ENCODE measurements at regions of chr3 and their contacts with region 1.

Region 1: DNA sequence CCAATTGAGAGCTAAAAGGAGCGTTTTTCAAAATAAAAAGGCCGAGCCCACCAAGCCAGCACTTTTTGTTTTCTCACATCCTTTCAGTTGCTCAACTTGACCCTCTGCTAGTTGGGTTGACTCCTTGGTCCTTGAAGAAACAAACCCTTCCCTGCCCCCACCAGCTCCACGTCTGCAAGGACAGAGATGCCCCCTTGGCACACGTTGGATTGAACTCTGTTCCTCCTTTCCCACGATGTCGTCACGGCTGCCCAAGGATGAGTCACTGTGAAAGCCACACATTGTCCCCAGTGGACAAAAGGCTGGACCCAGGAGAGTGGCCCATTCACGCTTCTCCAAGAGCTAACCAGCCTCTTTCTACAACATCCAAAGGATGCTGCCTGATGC is 43.0 kb upstream of the SPATA12 start:
- DNase-seq: peak in 9 of 10 donors; percentile 60 to 90 (median 86)
- H3K4me3 ChIP-seq: peak overlapping the region in 33 of 59 donors; percentile 0 to 51 (median 20)
- H3K27ac ChIP-seq: peak overlapping the region in 57 of 59 donors; percentile 40 to 97 (median 79)
- H3K27me3 ChIP-seq: no peaks in the 10 kb centered on the region
- CTCF ChIP-seq: peak in 10 of 56 donors; percentile 9 to 34 (median 15)

Region 2: GRCh38 chr3:56484122-56484521 is 533.3 kb before region 1 on chr3:
- intact Hi-C with region 1: no loop called
- DNase-seq: peak in 7 of 10 donors; percentile 44 to 77 (median 53)
- H3K4me3 ChIP-seq: no peak overlapping the region
- H3K27ac ChIP-seq: no peak overlapping the region
- H3K27me3 ChIP-seq: peaks cover 0 to 7% (median 0%) of the 10 kb centered on the region in 45 donors
- CTCF ChIP-seq: no peak

Region 3: DNA sequence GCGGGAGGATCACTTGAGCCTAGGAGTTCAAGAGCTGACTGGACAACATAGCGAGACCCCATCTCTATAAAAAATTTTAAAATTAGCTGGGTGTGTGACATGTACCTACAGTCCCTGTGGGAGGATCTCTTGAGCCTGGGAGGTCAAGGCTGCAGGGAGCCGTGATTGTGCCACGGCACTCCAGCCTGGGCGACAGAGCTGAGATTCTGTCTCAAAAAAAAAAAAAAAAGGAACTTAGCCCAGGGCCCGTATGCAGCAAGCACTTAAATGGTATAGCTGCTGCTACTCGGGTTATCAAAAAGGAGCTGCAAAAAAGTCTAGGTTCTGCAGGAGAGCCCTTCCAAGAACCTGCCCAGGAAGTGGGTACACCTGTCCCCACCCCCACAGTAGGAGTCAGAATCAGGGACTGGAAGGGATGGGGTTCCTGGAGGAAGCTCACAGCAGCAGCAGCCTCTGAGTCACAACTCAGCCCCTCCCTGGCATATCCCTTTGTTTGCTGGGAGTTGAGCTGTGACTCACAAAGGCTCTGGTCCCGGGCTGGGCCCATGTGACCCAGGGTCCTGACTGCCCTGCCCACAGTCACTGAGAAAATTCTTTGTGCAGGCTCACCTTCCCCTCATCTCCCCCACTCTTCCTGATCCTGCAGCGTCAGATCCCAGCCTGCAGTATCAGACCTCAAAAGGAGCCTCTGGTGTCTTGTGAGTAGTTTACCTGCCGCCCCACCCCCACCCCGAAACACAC is 42.8 kb after region 1 on chr3 and contains the start of gene SPATA12:
- intact Hi-C with region 1: loop called in 1 of 2 experiments (anchors 5 kb)
- DNase-seq: peak in 8 of 10 donors; percentile 38 to 91 (median 71)
- H3K4me3 ChIP-seq: no peak within 1 kb of the TSS
- H3K27ac ChIP-seq: peak within 1 kb of the TSS in 22 of 59 donors; percentile 8 to 84 (median 49)
- H3K27me3 ChIP-seq: no peaks in the 10 kb centered on the region
- CTCF ChIP-seq: no peak
- total RNA-seq, gene SPATA12: 0.19 to 0.22 TPM in 2 of 120 experiments, not detected in the others

Region 4: GRCh38 chr3:57086201-57086600 is 68.7 kb after region 1 on chr3:
- intact Hi-C with region 1: loop called in 1 of 2 experiments (anchors 5 kb)
- DNase-seq: no peak
- H3K4me3 ChIP-seq: no peak overlapping the region
- H3K27ac ChIP-seq: peak overlapping the region in 35 of 59 donors; percentile 1 to 82 (median 59)
- H3K27me3 ChIP-seq: no peaks in the 10 kb centered on the region
- CTCF ChIP-seq: peak in 1 of 56 donors; percentile 4

Measured in dorsolateral prefrontal cortex (tissue), 120 donors.